ENCODE measurements at regions of chr17 and their contacts with region 1.

Region 1: GRCh38 chr17:44589316-44590071 is 32.2 kb downstream of the FZD2 start:
- DNase-seq: no peak
- H3K4me3 ChIP-seq: no peak overlapping the region
- H3K27ac ChIP-seq: no peak overlapping the region
- H3K4me1 ChIP-seq: peaks cover 11% of the 10 kb centered on the region
- H3K27me3 ChIP-seq: no peaks in the 10 kb centered on the region
- CTCF ChIP-seq: no peak
- POLR2A ChIP-seq: no peak

Region 2: GRCh38 chr17:46035112-46035818 is 1445.8 kb after region 1 on chr17:
- intact Hi-C with region 1: loop called (anchors 5 kb)
- DNase-seq: no peak
- H3K4me3 ChIP-seq: no peak overlapping the region
- H3K27ac ChIP-seq: no peak overlapping the region
- H3K4me1 ChIP-seq: peaks cover 7% of the 10 kb centered on the region
- H3K27me3 ChIP-seq: no peaks in the 10 kb centered on the region
- CTCF ChIP-seq: no peak
- POLR2A ChIP-seq: no peak

Measured in vagina (tissue), 2 donors.